Endothelial cell of umbilical vein (primary cell): ENCODE measurements at regions of chr15 and their contacts with region 1.

Region 1: GRCh38 chr15:90691982-90692773 is 25.0 kb upstream of the BLM start:
- DNase-seq: no peak
- H3K4me3 ChIP-seq: no peak overlapping the region
- H3K27ac ChIP-seq: no peak overlapping the region
- H3K4me1 ChIP-seq: peaks cover 2% of the 10 kb centered on the region
- H3K27me3 ChIP-seq: no peaks in the 10 kb centered on the region
- CTCF ChIP-seq: no peak
- POLR2A ChIP-seq: no peak

Region 2: GRCh38 chr15:90013503-90013937 is 678.7 kb before region 1 on chr15:
- CTCF ChIA-PET with region 1: no interaction called
- POLR2A ChIA-PET with region 1: no interaction called
- dilution Hi-C with region 1: no loop called
- intact Hi-C with region 1: no loop called
- DNase-seq: no peak
- H3K4me3 ChIP-seq: no peak overlapping the region
- H3K27ac ChIP-seq: no peak overlapping the region
- H3K4me1 ChIP-seq: peaks cover 4% of the 10 kb centered on the region
- H3K27me3 ChIP-seq: no peaks in the 10 kb centered on the region
- CTCF ChIP-seq: no peak
- POLR2A ChIP-seq: no peak

Region 3: GRCh38 chr15:90497912-90498311 is 194.3 kb before region 1 on chr15:
- CTCF ChIA-PET with region 1: no interaction called
- POLR2A ChIA-PET with region 1: no interaction called
- dilution Hi-C with region 1: no loop called
- intact Hi-C with region 1: loop called (anchors 5 kb)
- DNase-seq: no peak
- H3K4me3 ChIP-seq: no peak overlapping the region
- H3K27ac ChIP-seq: no peak overlapping the region
- H3K4me1 ChIP-seq: no peaks in the 10 kb centered on the region
- H3K27me3 ChIP-seq: no peaks in the 10 kb centered on the region
- CTCF ChIP-seq: no peak
- POLR2A ChIP-seq: no peak